ENCODE measurements at regions of chr15 and their contacts with region 1.

Region 1: GRCh38 chr15:52331490-52332240 is 36.1 kb upstream of the MYO5C start:
- DNase-seq: peak; percentile 85
- ATAC-seq: peak; percentile 99
- H3K4me3 Mint-ChIP-seq: peak overlapping the region; percentile 24
- H3K27ac Mint-ChIP-seq: peak overlapping the region; percentile 83
- H3K4me1 Mint-ChIP-seq: peaks cover 37% of the 10 kb centered on the region
- H3K27me3 Mint-ChIP-seq: no peaks in the 10 kb centered on the region

Region 2: GRCh38 chr15:52256366-52256765 is 75.3 kb before region 1 on chr15:
- CTCF ChIA-PET with region 1: interaction called, 26 read pairs
- DNase-seq: peak; percentile 87
- ATAC-seq: peak; percentile 64
- H3K4me3 Mint-ChIP-seq: peak overlapping the region; percentile 57
- H3K27ac Mint-ChIP-seq: peak overlapping the region; percentile 80
- H3K4me1 Mint-ChIP-seq: peaks cover 49% of the 10 kb centered on the region
- H3K27me3 Mint-ChIP-seq: no peaks in the 10 kb centered on the region

Region 3: DNA sequence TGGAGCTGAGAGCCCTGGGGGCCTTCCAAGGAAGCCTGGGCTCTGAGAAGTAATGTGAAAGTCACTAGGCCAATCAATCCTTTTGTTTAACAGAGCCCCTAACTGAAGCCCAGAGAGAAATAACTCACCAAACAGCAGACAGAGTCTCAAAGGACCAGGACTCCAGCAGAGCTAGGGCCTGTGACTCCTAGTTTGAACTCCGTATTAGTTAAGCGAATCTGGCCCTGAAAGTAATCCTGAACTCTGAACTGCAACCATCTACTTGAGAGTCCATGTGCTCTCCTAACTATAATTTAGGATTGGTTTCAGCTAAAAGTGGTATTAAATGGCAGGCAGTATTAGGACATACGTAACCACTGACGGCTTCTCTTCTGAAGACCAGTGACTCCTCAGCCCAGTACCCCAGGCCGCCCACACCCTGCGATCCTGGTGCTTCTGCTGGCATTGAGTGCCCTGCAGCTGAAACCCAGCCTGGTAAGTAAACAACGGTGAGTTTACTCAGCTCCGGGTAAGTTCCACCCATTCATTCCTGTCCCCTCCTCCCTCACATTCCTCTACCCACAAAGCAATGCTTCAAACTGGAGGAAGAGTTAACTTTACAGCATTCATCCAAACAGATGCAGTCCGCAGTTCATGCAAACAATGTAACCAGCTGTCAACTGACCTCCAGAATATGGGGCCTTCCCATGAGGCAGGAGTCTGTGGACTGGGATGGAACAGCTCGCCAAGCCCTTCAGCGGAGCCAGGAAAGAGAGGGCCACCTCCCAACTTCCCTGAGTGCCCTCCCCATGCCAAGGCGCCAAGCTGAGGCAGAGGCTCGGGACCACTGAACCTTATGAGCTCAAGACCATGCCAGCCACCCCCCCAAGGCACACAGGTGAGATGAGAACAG is 43.4 kb before region 1 on chr15:
- CTCF ChIA-PET with region 1: no interaction called
- DNase-seq: no peak
- ATAC-seq: no peak
- H3K4me3 Mint-ChIP-seq: no peak overlapping the region
- H3K27ac Mint-ChIP-seq: no peak overlapping the region
- H3K4me1 Mint-ChIP-seq: peaks cover 21% of the 10 kb centered on the region
- H3K27me3 Mint-ChIP-seq: peaks cover 18% of the 10 kb centered on the region

Region 4: GRCh38 chr15:52466134-52466701 is 134.6 kb after region 1 on chr15:
- CTCF ChIA-PET with region 1: interaction called, 15 read pairs
- DNase-seq: peak; percentile 83
- ATAC-seq: peak; percentile 79
- H3K4me3 Mint-ChIP-seq: no peak overlapping the region
- H3K27ac Mint-ChIP-seq: peak overlapping the region; percentile 73
- H3K4me1 Mint-ChIP-seq: peaks cover 44% of the 10 kb centered on the region
- H3K27me3 Mint-ChIP-seq: no peaks in the 10 kb centered on the region

Region 5: DNA sequence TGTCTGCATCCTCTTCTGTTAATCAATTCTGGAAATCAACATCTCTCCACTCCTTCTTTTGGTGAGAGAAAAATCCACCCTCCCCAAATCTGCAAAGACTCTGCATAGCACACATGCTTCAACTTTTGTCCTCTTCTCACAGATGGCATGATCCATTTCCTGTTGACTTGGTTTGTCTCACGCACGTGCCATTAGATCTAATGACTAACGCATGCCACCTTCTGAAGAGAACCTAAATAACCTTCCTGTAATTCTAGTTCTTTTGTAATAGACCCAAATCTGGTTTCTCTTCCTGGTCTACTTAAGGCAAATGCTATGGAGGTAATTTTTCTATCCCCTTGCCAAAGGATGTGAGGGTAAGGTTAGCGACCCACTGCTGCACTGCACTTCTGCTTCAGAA is 398.5 kb after region 1 on chr15:
- CTCF ChIA-PET with region 1: interaction called, 52 read pairs
- DNase-seq: peak; percentile 62
- ATAC-seq: peak; percentile 61
- H3K4me3 Mint-ChIP-seq: no peak overlapping the region
- H3K27ac Mint-ChIP-seq: peak overlapping the region; percentile 57
- H3K4me1 Mint-ChIP-seq: peaks cover 32% of the 10 kb centered on the region
- H3K27me3 Mint-ChIP-seq: no peaks in the 10 kb centered on the region

Region 6: DNA sequence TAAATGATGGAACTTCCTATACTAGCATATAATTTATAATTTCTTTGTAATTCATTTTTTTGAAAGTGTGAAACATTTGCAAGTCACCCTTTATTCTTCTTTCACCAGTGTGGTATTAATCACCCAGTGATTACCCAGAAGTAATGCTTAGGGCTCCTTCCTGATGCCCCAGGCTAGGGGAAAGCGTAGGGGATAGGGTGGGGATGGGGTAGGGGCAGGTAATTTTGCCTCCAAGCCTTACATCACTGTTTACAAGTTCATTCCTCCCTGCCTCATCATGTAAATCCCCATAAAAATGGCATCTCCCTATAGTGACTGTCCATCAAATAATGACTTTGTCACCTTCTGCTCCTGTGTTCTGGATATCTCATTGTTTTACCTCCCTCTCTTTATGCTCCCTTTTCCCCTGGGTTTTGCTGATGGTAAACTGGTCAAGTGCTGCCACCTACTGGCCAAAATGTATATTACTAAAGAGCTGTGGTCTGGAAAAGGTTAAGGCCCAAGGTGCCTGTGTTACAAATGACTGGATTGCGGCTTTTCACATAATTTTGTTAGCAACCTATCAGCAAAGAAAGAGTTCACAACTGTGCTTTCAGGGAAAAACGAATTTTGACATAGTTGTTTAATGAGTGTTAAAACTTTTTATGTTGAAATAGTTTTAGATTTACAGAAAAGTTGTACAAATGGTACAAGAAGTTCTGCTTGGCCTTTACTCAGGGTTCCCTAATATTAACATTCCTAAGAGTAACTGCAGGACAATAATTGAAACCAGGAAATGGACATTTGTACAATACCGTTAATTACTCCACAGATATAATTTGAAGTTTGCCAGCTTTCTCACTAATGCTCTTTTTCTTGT is 403.8 kb after region 1 on chr15:
- CTCF ChIA-PET with region 1: interaction called, 52 read pairs
- DNase-seq: peak; percentile 79
- ATAC-seq: peak; percentile 92
- H3K4me3 Mint-ChIP-seq: no peak overlapping the region
- H3K27ac Mint-ChIP-seq: no peak overlapping the region
- H3K4me1 Mint-ChIP-seq: peaks cover 27% of the 10 kb centered on the region
- H3K27me3 Mint-ChIP-seq: peaks cover 16% of the 10 kb centered on the region